ENCODE measurements at regions of chr9 and their contacts with region 1.

Region 1: GRCh38 chr9:120755827-120756434 is 37.3 kb downstream of the FBXW2 start:
- DNase-seq: peak; percentile 33 to 83 (median 60)
- ATAC-seq: peak; percentile 67
- H3K4me3 ChIP-seq: no peak overlapping the region
- H3K4me3 Mint-ChIP-seq: no peak overlapping the region
- H3K27ac ChIP-seq: no peak overlapping the region
- H3K27ac Mint-ChIP-seq: peak overlapping the region; percentile 57
- H3K4me1 ChIP-seq: no peaks in the 10 kb centered on the region
- H3K4me1 Mint-ChIP-seq: peaks cover 18% of the 10 kb centered on the region
- H3K27me3 ChIP-seq: no peaks in the 10 kb centered on the region
- H3K27me3 Mint-ChIP-seq: no peaks in the 10 kb centered on the region
- CTCF ChIP-seq: peak; percentile 96

Region 2: DNA sequence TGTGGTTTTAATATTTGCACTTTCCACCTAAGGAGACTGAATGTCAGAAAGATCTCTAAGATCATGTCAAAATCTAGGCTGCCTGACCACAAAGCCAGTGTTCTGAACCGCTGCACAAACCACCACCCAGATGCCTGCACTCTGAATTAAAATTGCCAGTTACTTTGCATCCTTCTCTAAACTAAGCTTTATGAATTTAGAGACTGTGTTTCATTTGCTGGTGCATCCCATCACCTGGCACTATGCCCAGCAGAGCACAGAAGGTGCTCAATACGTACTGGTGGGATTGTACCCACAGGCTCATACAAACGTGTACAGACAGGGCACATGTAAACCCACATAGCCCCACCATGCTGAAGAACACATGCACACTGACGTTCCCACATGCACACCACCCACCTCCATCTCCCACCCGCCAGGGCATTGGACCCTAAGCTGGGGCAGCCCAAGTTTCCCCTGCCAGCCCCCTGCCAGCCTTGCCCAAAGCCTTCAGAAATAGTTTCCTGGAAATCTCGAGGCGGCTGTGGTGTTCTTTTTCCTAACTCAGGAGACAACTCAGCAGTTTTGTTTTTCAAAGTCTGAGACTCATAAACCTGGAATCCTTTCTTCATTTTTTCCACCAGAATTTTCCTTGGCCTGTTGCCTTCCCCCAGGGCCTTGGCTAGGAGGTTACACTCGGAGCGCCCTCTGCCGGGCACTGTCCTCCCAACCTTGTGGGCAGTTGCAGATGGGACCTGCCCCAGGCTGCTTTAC is 180.3 kb after region 1 on chr9:
- CTCF ChIA-PET with region 1: no interaction called
- POLR2A ChIA-PET with region 1: no interaction called
- intact Hi-C with region 1: loop called (anchors 1 to 2 kb)
- DNase-seq: peak; percentile 79 to 95 (median 88)
- ATAC-seq: peak; percentile 64
- H3K4me3 ChIP-seq: no peak overlapping the region
- H3K4me3 Mint-ChIP-seq: peak overlapping the region; percentile 46
- H3K27ac ChIP-seq: peak overlapping the region; percentile 45 to 100
- H3K27ac Mint-ChIP-seq: peak overlapping the region; percentile 100
- H3K4me1 ChIP-seq: peaks cover 56% of the 10 kb centered on the region
- H3K4me1 Mint-ChIP-seq: peaks cover 57% of the 10 kb centered on the region
- H3K27me3 ChIP-seq: no peaks in the 10 kb centered on the region
- H3K27me3 Mint-ChIP-seq: no peaks in the 10 kb centered on the region
- CTCF ChIP-seq: peak; percentile 94

Region 3: DNA sequence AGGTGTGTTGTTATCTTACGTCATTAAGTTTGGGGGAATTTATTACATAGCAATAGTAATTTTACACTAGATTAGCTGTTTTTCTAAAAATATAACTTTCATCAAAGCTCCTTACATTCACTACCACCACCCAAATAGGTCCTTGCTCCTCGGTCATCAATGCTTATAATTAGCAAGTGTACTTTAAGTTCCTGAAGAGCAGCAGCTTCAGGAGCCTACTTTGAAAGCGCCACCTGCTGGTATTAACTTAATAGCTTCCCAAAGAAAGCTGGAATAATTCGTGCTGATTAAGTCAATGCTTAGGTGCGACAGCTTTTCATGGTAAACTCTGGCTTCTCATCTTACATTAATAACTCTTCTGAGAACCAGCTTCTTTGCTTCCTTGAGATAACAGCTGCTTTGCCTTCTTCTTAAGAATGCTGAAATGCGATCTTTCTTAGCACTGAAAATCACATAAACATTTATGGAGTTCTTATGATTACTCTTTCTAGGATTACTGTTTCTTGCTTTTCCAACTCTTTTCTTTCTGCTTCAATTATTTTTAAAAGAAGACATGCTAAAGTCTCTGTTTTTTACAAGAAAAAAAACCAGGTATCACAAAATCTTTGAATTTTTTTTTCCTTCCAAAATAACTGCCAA is 304.2 kb after region 1 on chr9:
- CTCF ChIA-PET with region 1: interaction called, 8 read pairs
- POLR2A ChIA-PET with region 1: interaction called, 20 read pairs
- intact Hi-C with region 1: loop called (anchors 1 kb)
- DNase-seq: peak in 7 of 14 experiments; percentile 9 to 76 (median 59)
- ATAC-seq: no peak
- H3K4me3 ChIP-seq: no peak overlapping the region
- H3K4me3 Mint-ChIP-seq: no peak overlapping the region
- H3K27ac ChIP-seq: no peak overlapping the region
- H3K27ac Mint-ChIP-seq: no peak overlapping the region
- H3K4me1 ChIP-seq: peaks cover 5% of the 10 kb centered on the region
- H3K4me1 Mint-ChIP-seq: peaks cover 18% of the 10 kb centered on the region
- H3K27me3 ChIP-seq: no peaks in the 10 kb centered on the region
- H3K27me3 Mint-ChIP-seq: no peaks in the 10 kb centered on the region
- CTCF ChIP-seq: peak; percentile 77

Region 4: DNA sequence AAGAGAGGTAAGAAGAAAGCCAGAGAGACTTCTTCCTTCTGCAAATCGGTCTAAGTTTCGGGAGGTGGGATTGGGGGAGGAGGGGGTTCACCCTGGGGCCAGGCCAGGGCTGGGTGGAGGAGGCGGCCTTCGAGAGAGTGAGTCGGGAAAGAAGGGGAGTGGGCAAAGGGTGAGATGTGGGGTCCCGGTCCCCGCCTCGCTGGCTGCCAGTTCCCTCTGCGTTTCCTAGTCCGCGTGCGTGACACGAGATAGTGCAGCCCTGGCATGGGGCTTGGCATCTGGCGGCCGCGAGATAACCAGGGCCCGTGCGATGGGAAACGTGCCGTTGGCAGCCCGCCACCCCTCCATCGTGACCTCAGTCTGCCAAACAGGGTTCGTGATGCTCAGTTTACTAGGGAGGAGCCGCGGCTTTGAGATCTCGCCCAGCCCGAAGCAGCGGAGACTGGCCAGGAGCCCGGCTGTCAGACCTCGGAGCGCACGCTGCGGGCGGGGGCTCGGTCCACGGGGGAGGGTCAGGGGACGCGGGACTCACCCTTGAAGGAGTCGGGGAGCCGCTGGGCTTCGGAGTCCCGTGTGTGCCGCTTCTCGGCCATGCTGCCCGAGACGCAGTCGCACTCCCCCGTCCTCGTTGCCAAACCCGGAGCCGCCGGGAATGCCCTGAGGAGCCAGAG is 613.8 kb after region 1 on chr9 and contains the start of gene STOM:
- CTCF ChIA-PET with region 1: no interaction called
- POLR2A ChIA-PET with region 1: no interaction called
- intact Hi-C with region 1: loop called in 1 of 2 experiments (anchors 10 kb)
- DNase-seq: peak in 12 of 14 experiments; percentile 47 to 89 (median 60)
- ATAC-seq: peak; percentile 52
- H3K4me3 ChIP-seq: peak within 1 kb of the TSS; percentile 98
- H3K4me3 Mint-ChIP-seq: peak within 1 kb of the TSS; percentile 89
- H3K27ac ChIP-seq: peak within 1 kb of the TSS; percentile 76 to 79
- H3K27ac Mint-ChIP-seq: peak within 1 kb of the TSS; percentile 89
- H3K4me1 ChIP-seq: peaks cover 16% of the 10 kb centered on the region
- H3K4me1 Mint-ChIP-seq: peaks cover 70% of the 10 kb centered on the region
- H3K27me3 ChIP-seq: no peaks in the 10 kb centered on the region
- H3K27me3 Mint-ChIP-seq: no peaks in the 10 kb centered on the region
- CTCF ChIP-seq: no peak
- total RNA-seq, gene STOM: 26.1 to 27.9 TPM

Region 5: DNA sequence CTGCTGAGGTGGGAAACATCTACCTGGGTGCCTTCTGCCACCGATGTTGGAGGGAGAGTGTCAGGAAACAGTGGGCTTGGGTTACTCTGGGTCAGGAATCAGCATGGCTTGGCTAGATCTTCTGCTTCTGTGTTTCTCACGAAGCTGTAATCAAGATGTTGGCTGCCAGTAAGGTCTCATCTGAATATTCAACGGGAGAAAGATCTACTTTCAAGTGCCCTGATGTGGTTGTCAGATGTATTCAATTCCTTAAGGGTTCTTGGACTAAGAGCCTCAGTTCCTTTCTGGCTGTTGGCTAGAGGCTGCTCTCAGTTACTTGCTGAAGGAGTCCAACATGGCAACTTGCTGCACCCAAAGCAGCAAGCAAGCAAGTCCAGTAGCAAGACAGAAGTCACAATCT is 656.1 kb after region 1 on chr9:
- CTCF ChIA-PET with region 1: no interaction called
- POLR2A ChIA-PET with region 1: no interaction called
- intact Hi-C with region 1: no loop called
- DNase-seq: no peak
- ATAC-seq: no peak
- H3K4me3 ChIP-seq: no peak overlapping the region
- H3K4me3 Mint-ChIP-seq: no peak overlapping the region
- H3K27ac ChIP-seq: no peak overlapping the region
- H3K27ac Mint-ChIP-seq: no peak overlapping the region
- H3K4me1 ChIP-seq: no peaks in the 10 kb centered on the region
- H3K4me1 Mint-ChIP-seq: no peaks in the 10 kb centered on the region
- H3K27me3 ChIP-seq: no peaks in the 10 kb centered on the region
- H3K27me3 Mint-ChIP-seq: no peaks in the 10 kb centered on the region
- CTCF ChIP-seq: no peak

Region 6: DNA sequence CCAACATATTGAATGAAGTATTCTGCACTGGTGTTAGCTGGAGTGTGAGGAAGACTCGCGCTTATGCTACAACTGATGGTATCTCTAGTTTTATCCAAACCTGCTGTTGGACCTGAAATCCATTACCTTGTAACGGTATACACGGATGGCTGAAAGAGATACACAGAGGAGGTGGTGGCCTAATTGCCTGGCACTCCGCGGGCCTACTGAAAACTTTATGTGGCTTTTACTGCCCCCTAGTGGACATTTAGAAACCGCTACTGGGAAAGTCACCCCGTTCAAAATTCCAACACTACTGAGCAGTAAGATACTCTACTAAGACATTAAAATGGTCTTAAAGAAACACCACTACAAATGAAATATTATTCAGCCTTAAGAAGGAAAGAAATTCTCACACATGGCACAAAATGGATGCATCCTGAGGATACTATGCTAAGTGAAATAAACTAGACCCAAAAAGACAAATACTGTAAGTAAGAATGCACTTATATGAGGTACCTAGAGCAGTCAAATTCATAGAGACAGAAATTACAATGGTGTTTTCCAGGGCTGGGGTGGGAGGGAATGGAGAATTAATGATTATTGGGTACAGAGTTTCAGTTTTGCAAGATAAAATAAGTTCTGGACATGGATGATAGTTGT is 1236.8 kb after region 1 on chr9:
- CTCF ChIA-PET with region 1: no interaction called
- POLR2A ChIA-PET with region 1: no interaction called
- intact Hi-C with region 1: loop called in 1 of 2 experiments (anchors 5 kb)
- DNase-seq: peak in 10 of 14 experiments; percentile 3 to 70 (median 20)
- ATAC-seq: no peak
- H3K4me3 ChIP-seq: no peak overlapping the region
- H3K4me3 Mint-ChIP-seq: no peak overlapping the region
- H3K27ac ChIP-seq: no peak overlapping the region
- H3K27ac Mint-ChIP-seq: no peak overlapping the region
- H3K4me1 ChIP-seq: no peaks in the 10 kb centered on the region
- H3K4me1 Mint-ChIP-seq: no peaks in the 10 kb centered on the region
- H3K27me3 ChIP-seq: no peaks in the 10 kb centered on the region
- H3K27me3 Mint-ChIP-seq: no peaks in the 10 kb centered on the region
- CTCF ChIP-seq: peak; percentile 86

Measured in CD4-positive, alpha-beta T cell (primary cell).